KBM-7 (cell line): ENCODE measurements at regions of chr6 and their contacts with region 1.

Region 1: DNA sequence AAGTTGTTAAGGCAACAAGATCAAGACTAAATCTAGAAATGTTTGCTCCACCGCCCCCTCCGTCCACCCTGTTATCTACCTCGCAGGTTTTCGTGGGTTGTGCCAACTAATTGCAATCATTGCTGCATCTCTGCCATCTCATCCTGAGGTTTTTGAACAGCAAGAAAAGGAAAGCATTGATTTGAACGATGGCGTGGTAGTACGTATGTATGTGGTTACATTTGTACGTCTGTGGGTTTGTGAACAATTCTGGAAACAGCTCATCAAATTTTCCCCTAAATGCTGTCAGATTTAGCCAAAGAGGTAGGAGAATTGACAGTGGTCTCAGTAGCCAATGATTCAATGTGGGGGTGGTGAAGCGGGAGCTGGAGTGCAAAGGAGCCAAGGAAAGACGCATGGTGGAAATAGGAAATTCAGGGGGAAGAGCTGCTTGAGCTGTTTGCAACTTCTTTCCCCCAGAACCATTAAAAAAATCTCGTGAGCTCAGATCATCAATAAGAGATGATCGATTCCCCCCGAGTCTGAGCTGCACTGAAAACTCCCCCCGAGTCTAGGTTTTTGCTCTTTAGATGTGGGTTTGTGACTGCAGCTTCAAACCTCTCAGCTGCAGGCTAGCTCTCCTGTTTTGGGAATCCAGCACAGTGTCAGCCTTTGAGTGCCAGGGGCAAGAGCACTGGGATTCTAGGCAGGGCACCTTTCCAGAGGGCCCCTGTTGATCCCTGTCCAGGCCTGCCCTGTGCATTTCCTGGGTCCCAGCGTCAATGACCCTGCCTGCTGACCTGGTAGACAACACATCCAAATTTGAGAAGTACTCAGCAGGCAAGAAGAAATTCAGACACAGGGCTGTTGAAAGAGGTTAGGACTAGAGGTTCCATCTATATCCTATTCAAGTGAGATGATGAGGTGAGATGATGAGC is 72.6 kb upstream of the LY86 start:
- DNase-seq: no peak

Region 2: GRCh38 chr6:6057424-6058053 is 458.4 kb before region 1 on chr6:
- in situ Hi-C with region 1: loop called (anchors 25 kb)
- DNase-seq: peak; percentile 74

Region 3: GRCh38 chr6:6091608-6092002 is 424.3 kb before region 1 on chr6:
- in situ Hi-C with region 1: no loop called
- DNase-seq: no peak

Region 4: GRCh38 chr6:6803572-6803971 is 287.6 kb after region 1 on chr6:
- in situ Hi-C with region 1: no loop called
- DNase-seq: no peak